ENCODE measurements at regions of chr6 and their contacts with region 1.

Region 1: DNA sequence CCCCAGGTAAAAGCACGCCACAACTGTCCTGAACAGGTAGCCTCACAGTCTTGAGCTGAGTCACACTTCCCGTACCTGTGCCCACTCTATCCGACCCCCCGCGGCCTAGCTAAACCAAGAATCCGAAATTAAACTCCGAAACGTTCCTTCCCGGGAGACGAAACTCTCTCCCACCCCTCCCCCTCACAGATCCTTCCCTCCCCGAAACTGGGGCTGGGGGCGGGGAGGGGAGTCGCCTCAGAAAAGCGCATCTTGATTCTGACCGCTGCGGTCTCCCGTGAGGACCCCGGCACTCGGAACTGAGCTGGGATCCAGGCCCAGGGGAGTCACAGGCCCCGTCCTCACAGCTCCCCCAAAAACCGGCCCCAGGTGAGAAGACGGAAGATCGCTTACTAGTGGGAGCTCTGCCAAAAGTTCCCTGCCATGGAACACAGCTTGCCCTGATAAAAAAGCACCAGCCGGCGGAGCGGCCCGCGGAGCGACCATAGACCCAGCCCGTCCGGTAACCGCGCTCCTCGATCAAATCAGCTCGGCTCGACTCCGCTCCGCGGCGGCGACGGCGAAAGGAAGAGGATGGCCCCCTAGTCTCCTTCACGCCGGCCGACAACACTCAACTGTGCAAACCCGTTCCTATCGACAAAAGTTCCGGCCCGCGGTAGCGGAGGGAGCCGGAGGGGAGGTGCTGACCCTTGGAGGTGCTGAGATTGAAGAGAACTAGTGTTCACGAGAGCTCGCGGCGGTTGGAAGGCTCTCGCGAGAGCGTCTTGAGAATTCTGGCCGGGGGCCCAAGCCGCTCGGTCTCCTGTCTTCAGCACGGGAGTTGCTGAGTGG is at the start of gene CCNC:
- DNase-seq: peak; percentile 93
- ATAC-seq: peak; percentile 99 to 100 (median 99)
- H3K4me3 ChIP-seq: peak within 1 kb of the TSS; percentile 76 to 98 (median 94)
- H3K27ac ChIP-seq: peak within 1 kb of the TSS; percentile 26 to 89 (median 84)
- H3K4me1 ChIP-seq: peaks cover 4 to 33% (median 26%) of the 10 kb centered on the region in 9 donors
- H3K27me3 ChIP-seq: no peaks in the 10 kb centered on the region
- CTCF ChIP-seq: no peak
- total RNA-seq, gene CCNC: 14.2 to 24.1 (median 18.6) TPM

Region 2: GRCh38 chr6:99520855-99521632 is 47.3 kb before region 1 on chr6:
- intact Hi-C with region 1: loop called in 4 of 10 experiments (anchors 5 kb)
- DNase-seq: peak; percentile 82 to 84
- ATAC-seq: peak; percentile 96 to 99 (median 98)
- H3K4me3 ChIP-seq: peak overlapping the region; percentile 60 to 96 (median 74)
- H3K27ac ChIP-seq: peak overlapping the region; percentile 55 to 94 (median 89)
- H3K4me1 ChIP-seq: peaks cover 0 to 18% (median 8%) of the 10 kb centered on the region in 9 donors
- H3K27me3 ChIP-seq: no peaks in the 10 kb centered on the region
- CTCF ChIP-seq: peak; percentile 72 to 93 (median 87)

Region 3: DNA sequence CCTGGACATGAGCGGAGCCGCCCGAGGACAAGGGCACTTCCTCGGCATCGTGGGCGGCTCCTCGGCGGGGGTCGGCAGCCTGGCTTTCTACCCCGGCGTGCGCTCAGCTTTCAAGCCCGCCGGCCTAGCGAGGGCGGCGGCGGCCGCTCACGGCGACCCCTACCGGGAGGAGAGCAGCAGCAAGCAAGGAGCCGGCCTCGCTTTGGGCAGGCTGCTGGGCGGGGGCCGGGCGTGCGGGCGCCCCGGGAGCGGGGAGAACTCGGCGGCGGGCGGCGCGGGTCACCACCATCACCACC is 45.0 kb after region 1 on chr6:
- intact Hi-C with region 1: no loop called
- DNase-seq: peak in 1 of 2 donors; percentile 34
- ATAC-seq: peak in 7 of 8 donors; percentile 47 to 85 (median 66)
- H3K4me3 ChIP-seq: peak overlapping the region; percentile 27 to 55 (median 45)
- H3K27ac ChIP-seq: no peak overlapping the region
- H3K4me1 ChIP-seq: peaks cover 0 to 25% (median 20%) of the 10 kb centered on the region in 9 donors
- H3K27me3 ChIP-seq: peaks cover 52 to 100% (median 100%) of the 10 kb centered on the region in 7 donors
- CTCF ChIP-seq: peak in 8 of 9 donors; percentile 19 to 62 (median 50)

Region 4: DNA sequence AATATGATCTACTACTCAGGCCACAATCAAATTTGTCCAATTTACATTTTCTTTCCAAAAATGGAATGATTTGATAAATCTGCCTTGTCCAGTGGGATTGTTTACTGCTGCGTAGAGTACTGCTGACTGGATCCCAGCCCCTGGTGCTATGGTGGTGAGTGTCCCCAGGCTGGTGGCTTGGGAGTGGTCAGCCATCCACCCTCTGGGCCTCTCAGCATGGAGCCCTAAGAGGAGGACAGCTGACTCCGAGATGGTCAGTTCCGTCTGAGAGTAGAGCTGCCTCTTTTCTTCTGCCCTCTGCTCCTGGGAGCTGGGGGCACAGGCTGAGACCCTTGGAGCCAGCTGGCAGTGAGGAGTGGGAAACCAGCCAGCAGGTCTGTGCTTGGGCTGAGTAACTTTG is 61.0 kb after region 1 on chr6:
- intact Hi-C with region 1: no loop called
- DNase-seq: no peak
- ATAC-seq: no peak
- H3K4me3 ChIP-seq: no peak overlapping the region
- H3K27ac ChIP-seq: no peak overlapping the region
- H3K4me1 ChIP-seq: no peaks in the 10 kb centered on the region
- H3K27me3 ChIP-seq: peaks cover 0 to 50% (median 36%) of the 10 kb centered on the region in 7 donors
- CTCF ChIP-seq: no peak

Measured in heart right ventricle (tissue), 16 donors.